Posterior cingulate gyrus (tissue), 11 donors: ENCODE measurements at regions of chr7 and their contacts with region 1.

Region 1: DNA sequence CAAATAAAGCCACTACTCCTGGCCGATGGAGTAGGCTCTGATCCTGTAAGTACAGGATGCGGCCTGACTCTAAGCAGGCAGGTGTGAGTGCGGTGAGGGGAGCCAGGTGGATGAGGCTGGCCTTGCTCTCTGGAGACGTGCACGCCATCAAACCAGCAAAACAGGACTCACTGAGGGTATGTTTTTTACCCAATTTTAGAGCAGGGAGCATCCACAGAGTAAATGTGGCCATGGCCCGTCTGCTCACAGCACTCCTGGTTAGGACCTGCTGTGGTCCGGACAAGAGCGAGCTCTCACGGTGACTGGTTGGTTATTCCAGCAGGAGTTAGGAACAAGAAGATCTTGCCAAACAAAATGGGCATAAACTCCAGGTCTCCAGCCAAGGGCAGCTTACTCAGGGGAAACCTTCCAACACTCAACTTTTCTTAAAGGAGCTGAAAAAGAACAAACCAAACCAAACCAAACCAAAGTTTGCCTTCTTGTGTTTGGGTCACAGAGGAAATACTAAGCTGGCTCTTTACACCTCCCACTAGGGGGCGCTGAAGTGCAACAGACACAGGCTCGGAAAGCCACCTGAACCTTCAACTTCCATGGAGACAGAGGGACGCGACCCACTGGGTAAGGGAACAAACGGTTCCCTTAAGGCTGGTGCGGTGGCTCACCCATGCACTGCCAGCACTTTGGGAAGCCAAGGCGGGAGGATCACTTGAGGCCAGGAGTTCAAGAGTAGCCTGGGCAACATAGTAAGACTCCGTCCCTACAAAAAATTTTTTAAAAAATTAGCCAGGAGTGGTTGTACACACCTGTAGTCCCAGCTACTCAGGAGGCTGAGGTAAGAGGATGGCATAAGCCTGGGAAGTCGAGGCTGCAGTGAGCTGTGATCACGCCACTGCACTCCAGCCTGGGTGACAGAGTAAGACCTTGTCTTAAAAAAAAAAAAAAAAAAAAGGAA is 122.4 kb downstream of the CLEC2L start:
- DNase-seq: peak; percentile 68 to 97 (median 88)

Region 2: DNA sequence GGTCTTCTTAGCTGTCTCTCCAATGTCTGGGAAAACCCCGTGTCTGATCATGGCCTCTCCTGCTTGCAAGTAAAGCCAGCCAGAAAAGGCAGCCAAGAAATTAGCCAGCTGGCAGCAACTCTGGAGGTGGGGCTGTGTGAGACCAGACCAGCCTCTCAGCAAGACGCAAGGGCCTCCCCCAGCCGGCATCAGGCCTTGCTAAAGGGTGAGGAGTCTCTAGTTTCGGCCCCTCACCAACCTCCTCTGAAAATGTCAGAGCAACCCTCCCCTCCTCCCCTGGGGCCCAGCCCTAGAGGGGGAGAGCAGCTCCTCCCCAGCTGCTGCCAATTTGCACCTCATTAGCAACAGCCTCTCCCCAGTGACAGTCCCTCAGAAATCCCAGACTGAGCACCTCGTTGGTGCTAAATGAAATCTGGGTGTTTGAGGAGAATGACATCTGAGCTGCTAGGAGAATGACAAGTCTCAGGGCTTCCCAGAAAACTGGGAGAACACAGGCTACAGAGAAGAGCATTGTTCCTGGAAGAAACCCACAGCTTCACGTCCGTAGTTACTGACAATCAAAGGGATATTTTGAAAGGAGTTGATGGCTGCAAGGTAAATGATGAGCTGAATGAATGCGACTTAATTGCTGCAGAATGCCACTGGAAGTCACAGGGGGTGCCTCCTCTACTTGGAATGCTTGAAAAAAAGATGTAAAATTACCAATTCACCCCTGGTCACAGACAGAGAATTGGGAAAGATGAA is 1825.0 kb before region 1 on chr7:
- intact Hi-C with region 1: no loop called
- DNase-seq: peak in 9 of 10 donors; percentile 29 to 90 (median 40)

Region 3: GRCh38 chr7:139777948-139778841 is 132.3 kb after region 1 on chr7 and contains the start of gene HIPK2:
- intact Hi-C with region 1: loop called (anchors 2 kb)
- DNase-seq: peak; percentile 64 to 96 (median 74)